OCI-LY7 (cell line): ENCODE measurements at regions of chr11 and their contacts with region 1.

Region 1: DNA sequence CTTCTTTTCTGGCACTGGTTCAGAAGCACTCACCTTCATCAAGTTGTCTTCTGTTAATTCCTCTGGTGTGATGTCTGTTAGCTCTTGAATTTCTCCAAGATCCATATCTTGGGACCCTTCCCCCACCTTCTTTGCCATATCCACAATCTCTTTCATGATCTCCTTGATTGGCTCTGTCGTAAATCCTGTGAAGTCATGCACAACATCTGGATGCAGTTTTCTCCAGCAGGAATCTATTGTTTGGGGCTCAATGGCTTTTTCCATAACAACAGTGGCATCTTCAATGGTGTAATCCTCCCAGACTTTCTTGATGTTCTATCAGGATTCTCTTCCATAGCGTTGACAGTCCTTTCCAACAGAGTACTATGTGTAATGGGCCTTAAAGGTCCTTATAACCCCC is 96.9 kb downstream of the CSTPP1 start:
- DNase-seq: no peak
- H3K4me3 ChIP-seq: no peak overlapping the region
- H3K27ac ChIP-seq: no peak overlapping the region
- H3K4me1 ChIP-seq: no peaks in the 10 kb centered on the region
- CTCF ChIP-seq: no peak

Region 2: GRCh38 chr11:46845740-46846509 is 187.5 kb before region 1 on chr11 and contains the start of gene CKAP5:
- CTCF ChIA-PET with region 1: no interaction called
- POLR2A ChIA-PET with region 1: no interaction called
- intact Hi-C with region 1: no loop called
- DNase-seq: peak; percentile 94
- H3K4me3 ChIP-seq: peak within 1 kb of the TSS; percentile 93
- H3K27ac ChIP-seq: peak within 1 kb of the TSS; percentile 61
- H3K4me1 ChIP-seq: peaks cover 18% of the 10 kb centered on the region
- CTCF ChIP-seq: no peak
- total RNA-seq, gene CKAP5: 146 and 161 TPM in 2 replicates

Region 3: GRCh38 chr11:47047972-47048371 is 14.5 kb after region 1 on chr11:
- CTCF ChIA-PET with region 1: no interaction called
- POLR2A ChIA-PET with region 1: interaction called, 5 read pairs
- intact Hi-C with region 1: loop called (anchors 1 kb)
- DNase-seq: peak; percentile 61
- H3K4me3 ChIP-seq: peak overlapping the region; percentile 1
- H3K27ac ChIP-seq: peak overlapping the region; percentile 52
- H3K4me1 ChIP-seq: peaks cover 26% of the 10 kb centered on the region
- CTCF ChIP-seq: no peak